ENCODE measurements at regions of chr1 and their contacts with region 1.

Region 1: DNA sequence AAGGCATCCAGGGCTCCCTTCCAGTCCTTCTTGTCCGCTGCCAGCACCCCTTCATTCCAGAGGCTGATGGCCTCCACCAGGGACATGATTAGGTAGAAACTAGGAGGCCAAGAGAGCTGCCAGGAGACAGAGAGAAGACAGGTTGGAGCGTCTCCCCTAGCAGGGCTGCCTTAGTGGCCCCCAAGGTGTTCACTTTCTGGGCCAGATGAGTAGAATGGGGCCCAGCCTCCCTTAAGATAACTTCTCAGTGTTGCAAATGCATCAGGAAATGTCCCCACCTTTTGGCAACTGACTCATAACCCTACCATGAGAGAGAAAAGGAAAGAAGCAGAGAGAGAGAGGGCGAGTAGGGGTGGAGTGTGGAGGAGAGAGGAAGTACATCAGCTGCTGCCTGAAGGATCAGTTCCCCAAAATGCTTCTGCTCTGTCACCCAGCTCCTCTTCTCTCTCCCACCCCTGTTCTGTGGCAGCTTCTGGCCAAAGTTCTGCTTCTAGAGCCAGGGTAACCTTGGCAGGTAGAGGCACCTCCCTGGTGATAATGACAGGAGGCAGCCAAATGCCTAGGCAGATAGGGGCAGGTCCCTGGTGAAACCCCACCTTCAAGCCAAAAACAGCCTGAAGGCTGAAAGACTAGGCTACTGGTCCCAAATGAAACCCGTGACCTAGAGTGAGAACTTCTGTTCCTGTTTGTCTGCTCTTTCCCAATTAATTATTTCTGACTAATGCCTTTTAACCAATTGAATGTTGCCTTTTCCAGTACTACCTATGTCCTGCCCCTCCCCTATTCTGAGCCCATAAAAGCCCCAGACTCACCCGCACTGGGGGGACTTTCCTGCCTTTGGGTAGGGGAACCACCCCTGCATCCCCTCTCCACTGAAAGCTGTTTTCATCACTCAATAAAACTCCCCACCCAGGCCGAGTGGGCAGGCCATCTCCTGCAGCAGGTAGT is at the start of gene NCF2:
- DNase-seq: peak; percentile 67
- H3K4me3 Mint-ChIP-seq: peak within 1 kb of the TSS; percentile 73
- H3K27ac Mint-ChIP-seq: peak within 1 kb of the TSS; percentile 93
- H3K4me1 Mint-ChIP-seq: peaks cover 46% of the 10 kb centered on the region
- H3K27me3 Mint-ChIP-seq: no peaks in the 10 kb centered on the region
- total RNA-seq, gene NCF2: 21.5 to 23.0 TPM

Region 2: DNA sequence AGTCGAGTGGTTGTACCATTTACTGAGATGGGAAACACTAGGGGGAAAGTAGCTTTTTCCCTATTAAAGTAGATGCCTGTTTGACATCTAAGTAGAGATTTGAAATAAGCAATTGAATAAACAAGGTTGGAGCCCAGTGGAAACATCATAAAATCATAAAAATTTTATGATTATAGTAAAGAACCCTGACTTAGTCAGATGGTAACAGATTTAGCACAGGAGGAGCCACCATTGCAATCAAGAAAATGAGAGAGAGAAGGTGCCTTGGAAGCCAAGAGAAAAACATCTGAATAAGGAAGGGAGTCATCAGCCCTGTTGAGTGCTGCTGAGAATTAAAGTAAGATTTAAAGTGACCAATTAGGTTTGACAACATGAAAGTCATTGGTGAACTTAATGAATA is 68.4 kb before region 1 on chr1:
- CTCF ChIA-PET with region 1: no interaction called
- POLR2A ChIA-PET with region 1: no interaction called
- DNase-seq: no peak
- H3K4me3 Mint-ChIP-seq: no peak overlapping the region
- H3K27ac Mint-ChIP-seq: no peak overlapping the region
- H3K4me1 Mint-ChIP-seq: peaks cover 4% of the 10 kb centered on the region
- H3K27me3 Mint-ChIP-seq: no peaks in the 10 kb centered on the region

Region 3: DNA sequence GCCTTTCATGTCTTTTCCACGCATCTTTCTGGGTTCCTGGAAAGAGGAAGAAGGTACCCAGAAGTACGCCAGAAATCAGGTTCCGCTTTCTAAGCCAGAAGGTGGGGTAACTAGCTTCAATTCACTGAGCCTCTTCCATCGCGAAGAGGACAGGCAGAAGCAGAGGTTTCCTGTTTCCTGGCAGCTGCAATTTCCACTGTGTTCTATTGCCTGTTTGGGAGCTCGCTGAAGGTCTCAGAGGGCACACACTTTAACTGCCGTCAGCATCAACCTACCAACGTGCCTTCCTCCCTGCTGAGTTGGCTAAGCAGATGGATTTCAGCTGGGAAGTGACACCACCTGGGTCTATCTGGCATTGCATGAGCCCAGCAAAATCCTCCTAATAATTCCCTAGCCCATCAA is 10.2 kb before region 1 on chr1:
- CTCF ChIA-PET with region 1: interaction called, 25 read pairs
- POLR2A ChIA-PET with region 1: interaction called, 17 read pairs
- DNase-seq: peak; percentile 19
- H3K4me3 Mint-ChIP-seq: no peak overlapping the region
- H3K27ac Mint-ChIP-seq: peak overlapping the region; percentile 79
- H3K4me1 Mint-ChIP-seq: peaks cover 26% of the 10 kb centered on the region
- H3K27me3 Mint-ChIP-seq: peaks cover 2% of the 10 kb centered on the region